Mammary epithelial cell (primary cell): ENCODE measurements at regions of chr6 and their contacts with region 1.

Region 1: DNA sequence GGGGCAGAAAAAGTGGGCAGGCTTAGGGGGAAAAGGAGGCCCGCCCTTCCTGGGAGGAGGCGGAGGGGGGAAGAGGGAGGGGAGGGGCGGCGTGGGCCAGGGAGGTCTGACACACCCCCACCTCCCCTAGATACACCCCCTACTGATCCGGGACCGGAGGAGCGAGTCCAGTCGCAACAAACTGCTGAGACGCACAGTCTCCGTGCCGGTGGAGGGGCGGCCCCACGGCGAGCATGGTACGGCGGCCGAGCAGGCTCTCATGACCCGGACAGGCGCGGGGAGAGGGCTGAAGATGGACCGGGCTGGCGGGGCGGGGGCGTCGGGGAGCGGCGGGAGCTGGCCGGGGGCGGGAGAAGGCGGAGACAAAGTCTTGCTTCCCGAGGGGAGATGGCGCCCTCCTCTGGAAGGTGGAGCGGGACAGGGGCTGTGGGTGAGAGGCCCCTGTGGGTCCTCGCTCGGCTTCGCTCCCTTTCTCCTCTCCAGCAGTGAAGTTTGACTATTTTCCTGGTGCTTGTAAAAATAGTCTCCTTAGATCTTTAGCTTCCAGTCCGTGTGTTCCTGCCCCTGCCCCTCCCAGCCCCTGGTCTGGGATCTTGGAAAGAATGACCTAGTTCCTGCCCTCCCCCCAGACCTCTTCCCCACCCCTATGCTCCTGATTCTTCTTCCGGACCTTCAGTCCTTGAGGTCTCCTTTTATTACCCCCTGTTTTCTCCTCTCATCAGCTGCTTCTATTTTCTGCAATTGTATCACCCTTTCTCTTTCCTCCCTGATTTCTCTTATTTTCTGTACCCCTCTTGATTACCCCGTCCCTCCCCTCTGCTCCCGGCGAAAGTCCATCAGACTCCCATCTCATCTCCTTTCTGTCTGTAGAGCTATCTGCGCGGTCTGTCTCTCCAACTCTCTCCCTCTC is 6.1 kb downstream of the SYNGAP1 start:
- DNase-seq: peak; percentile 82
- H3K4me3 ChIP-seq: peak overlapping the region; percentile 55 to 72 (median 68)
- H3K27ac ChIP-seq: peak overlapping the region; percentile 68
- H3K4me1 ChIP-seq: peaks cover 42% of the 10 kb centered on the region
- H3K27me3 ChIP-seq: no peaks in the 10 kb centered on the region
- CTCF ChIP-seq: peak; percentile 36 to 81

Region 2: GRCh38 chr6:33279971-33280511 is 145.9 kb before region 1 on chr6:
- CTCF ChIA-PET with region 1: no interaction called
- dilution Hi-C with region 1: no loop called
- in situ Hi-C with region 1: no loop called
- intact Hi-C with region 1: loop called (anchors 1 kb)
- DNase-seq: peak; percentile 64
- H3K4me3 ChIP-seq: no peak overlapping the region
- H3K27ac ChIP-seq: no peak overlapping the region
- H3K4me1 ChIP-seq: peaks cover 18% of the 10 kb centered on the region
- H3K27me3 ChIP-seq: no peaks in the 10 kb centered on the region
- CTCF ChIP-seq: peak; percentile 78

Region 3: DNA sequence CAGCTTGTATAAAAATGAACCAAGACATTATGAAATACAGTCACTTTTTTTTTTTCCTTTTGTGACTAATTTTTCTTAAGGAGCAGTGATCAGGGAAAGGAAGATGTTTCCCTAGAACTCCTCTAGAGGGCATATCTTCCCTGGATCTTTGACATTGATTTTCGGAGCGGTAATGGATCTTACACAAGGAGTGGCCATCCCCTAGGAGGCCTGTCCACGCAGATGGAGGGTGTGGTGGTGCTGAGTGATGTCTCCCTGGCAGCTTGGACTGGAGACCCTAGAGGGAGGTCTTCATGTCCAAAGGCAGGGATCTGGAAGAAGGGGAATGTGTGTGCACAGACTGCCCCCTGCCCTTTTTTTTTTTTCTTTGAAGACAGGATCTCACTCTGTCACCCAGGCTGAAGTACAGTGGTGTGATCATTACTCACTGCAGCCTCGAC is 41.3 kb before region 1 on chr6:
- CTCF ChIA-PET with region 1: no interaction called
- dilution Hi-C with region 1: loop called (anchors 5 kb)
- in situ Hi-C with region 1: no loop called
- intact Hi-C with region 1: no loop called
- DNase-seq: peak; percentile 62
- H3K4me3 ChIP-seq: no peak overlapping the region
- H3K27ac ChIP-seq: no peak overlapping the region
- H3K4me1 ChIP-seq: peaks cover 7% of the 10 kb centered on the region
- H3K27me3 ChIP-seq: no peaks in the 10 kb centered on the region
- CTCF ChIP-seq: peak; percentile 49 to 62

Region 4: GRCh38 chr6:33391278-33391921 is 34.5 kb before region 1 on chr6 and contains the start of gene KIFC1:
- CTCF ChIA-PET with region 1: no interaction called
- dilution Hi-C with region 1: no loop called
- in situ Hi-C with region 1: no loop called
- intact Hi-C with region 1: loop called (anchors 1 kb)
- DNase-seq: peak; percentile 100
- H3K4me3 ChIP-seq: peak within 1 kb of the TSS; percentile 67 to 93 (median 91)
- H3K27ac ChIP-seq: peak within 1 kb of the TSS; percentile 88
- H3K4me1 ChIP-seq: peaks cover 37% of the 10 kb centered on the region
- H3K27me3 ChIP-seq: no peaks in the 10 kb centered on the region
- CTCF ChIP-seq: peak; percentile 88 to 94
- total RNA-seq, gene KIFC1: 2.8 to 36.7 TPM

Region 5: GRCh38 chr6:33454009-33454946 is 28.4 kb after region 1 on chr6 and contains the start of gene ZBTB9:
- CTCF ChIA-PET with region 1: interaction called, 9 read pairs
- dilution Hi-C with region 1: no loop called
- in situ Hi-C with region 1: no loop called
- intact Hi-C with region 1: loop called (anchors 2 kb)
- DNase-seq: peak; percentile 96
- H3K4me3 ChIP-seq: peak within 1 kb of the TSS; percentile 73 to 97 (median 92)
- H3K27ac ChIP-seq: peak within 1 kb of the TSS; percentile 61
- H3K4me1 ChIP-seq: peaks cover 5% of the 10 kb centered on the region
- H3K27me3 ChIP-seq: no peaks in the 10 kb centered on the region
- CTCF ChIP-seq: no peak
- total RNA-seq, gene ZBTB9: 5.7 to 10.3 TPM

Region 6: GRCh38 chr6:33570806-33571636 is 145.1 kb after region 1 on chr6:
- CTCF ChIA-PET with region 1: no interaction called
- dilution Hi-C with region 1: no loop called
- in situ Hi-C with region 1: loop called in 1 of 2 experiments (anchors 25 kb)
- intact Hi-C with region 1: no loop called
- DNase-seq: peak; percentile 59
- H3K4me3 ChIP-seq: peak overlapping the region; percentile 46 to 57 (median 48)
- H3K27ac ChIP-seq: peak overlapping the region; percentile 75
- H3K4me1 ChIP-seq: peaks cover 18% of the 10 kb centered on the region
- H3K27me3 ChIP-seq: no peaks in the 10 kb centered on the region
- CTCF ChIP-seq: no peak

Region 7: GRCh38 chr6:34664256-34664971 is 1238.5 kb after region 1 on chr6:
- CTCF ChIA-PET with region 1: no interaction called
- dilution Hi-C with region 1: no loop called
- in situ Hi-C with region 1: no loop called
- intact Hi-C with region 1: no loop called
- DNase-seq: no peak
- H3K4me3 ChIP-seq: no peak overlapping the region
- H3K27ac ChIP-seq: peak overlapping the region; percentile 34
- H3K4me1 ChIP-seq: peaks cover 10% of the 10 kb centered on the region
- H3K27me3 ChIP-seq: no peaks in the 10 kb centered on the region
- CTCF ChIP-seq: no peak